H1 (cell line): ENCODE measurements at regions of chr7 and their contacts with region 1.

Region 1: GRCh38 chr7:8305625-8306381 is 43.8 kb upstream of the ICA1 start:
- DNase-seq: no peak
- H3K4me3 ChIP-seq: no peak overlapping the region
- H3K27ac ChIP-seq: no peak overlapping the region
- H3K4me1 ChIP-seq: peaks cover 0 to 4% (median 0%) of the 10 kb centered on the region in 4 experiments; a peak in 1 of 7 replicates
- H3K27me3 ChIP-seq: no peaks in the 10 kb centered on the region
- CTCF ChIP-seq: no peak
- EP300 ChIP-seq: no peak
- POLR2A ChIP-seq: no peak
- RAD21 ChIP-seq: no peak

Region 2: GRCh38 chr7:7554021-7554432 is 751.8 kb before region 1 on chr7:
- CTCF ChIA-PET with region 1: no interaction called
- POLR2A ChIA-PET with region 1: no interaction called
- DNase-seq: no peak
- H3K4me3 ChIP-seq: no peak overlapping the region
- H3K27ac ChIP-seq: no peak overlapping the region
- H3K4me1 ChIP-seq: no peaks in the 10 kb centered on the region
- H3K27me3 ChIP-seq: no peaks in the 10 kb centered on the region
- CTCF ChIP-seq: no peak
- EP300 ChIP-seq: no peak
- POLR2A ChIP-seq: no peak
- RAD21 ChIP-seq: no peak

Region 3: GRCh38 chr7:8249121-8249520 is 56.7 kb before region 1 on chr7:
- CTCF ChIA-PET with region 1: no interaction called
- POLR2A ChIA-PET with region 1: no interaction called
- DNase-seq: no peak
- H3K4me3 ChIP-seq: no peak overlapping the region
- H3K27ac ChIP-seq: no peak overlapping the region
- H3K4me1 ChIP-seq: no peaks in the 10 kb centered on the region; a peak in 1 of 7 replicates
- H3K27me3 ChIP-seq: no peaks in the 10 kb centered on the region
- CTCF ChIP-seq: no peak
- EP300 ChIP-seq: no peak
- POLR2A ChIP-seq: no peak
- RAD21 ChIP-seq: no peak

Region 4: DNA sequence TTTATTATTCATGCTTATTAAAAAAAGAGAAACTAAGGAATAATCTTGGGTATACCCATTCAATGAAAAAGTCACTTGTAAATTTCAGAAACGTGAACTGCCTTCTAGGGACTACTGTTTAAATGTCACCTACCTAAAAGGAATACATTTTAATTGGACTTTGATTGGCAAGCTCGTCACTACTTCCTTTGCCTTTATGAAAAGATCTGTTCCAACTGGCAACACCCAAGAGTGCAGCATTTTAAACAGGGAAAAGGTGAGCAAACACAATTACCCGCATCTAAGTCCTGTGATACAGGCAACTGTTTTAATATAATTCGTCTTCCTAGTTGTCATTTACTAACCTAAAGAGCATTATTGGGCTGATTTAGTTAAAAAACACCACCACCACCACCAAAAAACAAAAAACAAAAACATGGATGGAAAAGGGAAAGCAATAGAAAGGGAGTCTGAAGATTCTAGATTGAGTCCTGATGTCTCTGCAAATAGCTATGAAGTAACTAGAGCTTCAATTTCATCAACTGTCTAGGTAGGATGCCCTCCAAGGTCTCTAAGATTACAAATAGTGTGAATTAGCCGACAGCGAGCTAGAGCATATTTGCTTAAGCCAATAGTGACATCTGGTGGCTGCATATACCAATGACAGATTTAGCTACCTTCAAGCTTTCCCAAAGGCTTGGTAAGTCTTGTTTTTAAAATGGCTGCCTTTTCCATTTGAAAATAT is 10.0 kb before region 1 on chr7:
- CTCF ChIA-PET with region 1: interaction called, 17 read pairs
- POLR2A ChIA-PET with region 1: no interaction called
- DNase-seq: peak in 1 of 2 experiments; percentile 17
- H3K4me3 ChIP-seq: no peak overlapping the region
- H3K27ac ChIP-seq: no peak overlapping the region
- H3K4me1 ChIP-seq: no peaks in the 10 kb centered on the region
- H3K27me3 ChIP-seq: no peaks in the 10 kb centered on the region
- CTCF ChIP-seq: peak in 2 of 3 experiments; percentile 71 to 81; a peak in 3 of 4 replicates
- EP300 ChIP-seq: no peak
- POLR2A ChIP-seq: no peak
- RAD21 ChIP-seq: peak; percentile 96 to 99

Region 5: GRCh38 chr7:8327199-8327598 is 21.4 kb after region 1 on chr7:
- CTCF ChIA-PET with region 1: no interaction called
- POLR2A ChIA-PET with region 1: no interaction called
- DNase-seq: no peak
- H3K4me3 ChIP-seq: no peak overlapping the region
- H3K27ac ChIP-seq: no peak overlapping the region
- H3K4me1 ChIP-seq: no peaks in the 10 kb centered on the region
- H3K27me3 ChIP-seq: no peaks in the 10 kb centered on the region
- CTCF ChIP-seq: no peak
- EP300 ChIP-seq: no peak
- POLR2A ChIP-seq: no peak
- RAD21 ChIP-seq: no peak